ENCODE measurements at regions of chr11 and their contacts with region 1.

Region 1: DNA sequence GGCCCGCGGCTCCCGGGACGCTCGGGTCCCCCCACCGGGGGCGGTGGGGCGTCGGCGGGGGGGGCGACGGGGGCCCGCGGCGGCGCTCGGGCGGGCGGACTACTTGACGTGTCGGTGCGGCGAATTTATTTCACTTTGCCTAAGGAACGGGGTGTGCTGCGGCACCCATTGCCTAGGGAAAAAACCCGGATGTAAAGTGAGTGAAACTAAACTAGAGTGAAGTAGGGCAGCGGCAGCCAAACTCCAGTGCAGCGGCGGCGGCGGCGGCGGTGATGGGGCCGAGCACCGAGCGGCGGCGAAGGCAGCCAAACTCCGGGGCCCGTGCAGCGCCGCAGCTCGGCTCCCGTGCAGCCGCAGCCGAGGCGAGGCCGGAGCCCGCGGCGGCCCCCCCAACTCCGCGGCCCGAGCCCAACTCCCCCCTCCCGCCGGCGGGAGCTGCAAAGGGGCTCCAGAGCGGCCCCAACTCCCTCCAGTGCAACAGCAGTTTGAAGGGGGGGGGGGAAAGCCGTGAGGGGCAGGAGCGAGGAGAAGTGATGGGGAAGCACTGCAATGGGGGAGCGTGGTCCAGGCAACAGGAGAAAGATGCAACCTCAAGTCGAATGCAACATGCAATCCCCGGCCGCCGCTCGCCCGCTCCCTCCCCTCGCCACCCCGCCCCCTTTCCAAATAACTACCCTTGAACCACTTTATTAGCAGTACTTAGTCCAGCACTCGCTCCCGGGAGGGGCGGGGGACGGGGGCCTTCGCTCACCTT is 647 bp upstream of the PHF21A start:
- DNase-seq: peak; percentile 94
- H3K4me3 Mint-ChIP-seq: peak overlapping the region; percentile 84
- H3K27ac Mint-ChIP-seq: peak overlapping the region; percentile 82
- H3K4me1 Mint-ChIP-seq: peaks cover 36% of the 10 kb centered on the region
- H3K27me3 Mint-ChIP-seq: no peaks in the 10 kb centered on the region

Region 2: GRCh38 chr11:45917623-45918330 is 204.1 kb before region 1 on chr11 and contains the start of gene PEX16:
- intact Hi-C with region 1: loop called (anchors 2 kb)
- DNase-seq: peak; percentile 99
- H3K4me3 Mint-ChIP-seq: peak within 1 kb of the TSS; percentile 99
- H3K27ac Mint-ChIP-seq: peak within 1 kb of the TSS; percentile 97
- H3K4me1 Mint-ChIP-seq: peaks cover 21% of the 10 kb centered on the region
- H3K27me3 Mint-ChIP-seq: peaks cover 10% of the 10 kb centered on the region
- total RNA-seq, gene PEX16: 31.3 and 34.8 TPM in 2 replicates

Region 3: DNA sequence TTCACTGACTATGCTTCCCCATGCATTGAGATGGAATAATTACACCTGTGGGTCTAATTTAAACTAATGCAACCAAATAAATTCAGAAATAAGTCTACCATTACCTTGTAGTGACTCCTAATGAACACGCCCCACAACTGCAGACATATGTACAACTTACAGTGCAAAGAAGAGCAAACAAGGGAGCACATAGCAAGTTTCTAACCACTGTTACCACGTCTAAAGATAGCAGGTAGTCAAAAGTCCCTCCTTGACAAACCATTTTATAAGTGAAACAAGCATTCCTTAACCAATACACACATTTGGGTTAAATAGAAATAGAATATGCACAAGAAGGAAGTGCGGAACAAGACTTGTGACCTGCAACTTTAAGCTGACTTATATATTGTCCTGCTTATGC is 21.2 kb before region 1 on chr11:
- intact Hi-C with region 1: loop called (anchors 2 kb)
- DNase-seq: no peak
- H3K4me3 Mint-ChIP-seq: peak overlapping the region; percentile 64
- H3K27ac Mint-ChIP-seq: no peak overlapping the region
- H3K4me1 Mint-ChIP-seq: peaks cover 37% of the 10 kb centered on the region
- H3K27me3 Mint-ChIP-seq: no peaks in the 10 kb centered on the region

Region 4: DNA sequence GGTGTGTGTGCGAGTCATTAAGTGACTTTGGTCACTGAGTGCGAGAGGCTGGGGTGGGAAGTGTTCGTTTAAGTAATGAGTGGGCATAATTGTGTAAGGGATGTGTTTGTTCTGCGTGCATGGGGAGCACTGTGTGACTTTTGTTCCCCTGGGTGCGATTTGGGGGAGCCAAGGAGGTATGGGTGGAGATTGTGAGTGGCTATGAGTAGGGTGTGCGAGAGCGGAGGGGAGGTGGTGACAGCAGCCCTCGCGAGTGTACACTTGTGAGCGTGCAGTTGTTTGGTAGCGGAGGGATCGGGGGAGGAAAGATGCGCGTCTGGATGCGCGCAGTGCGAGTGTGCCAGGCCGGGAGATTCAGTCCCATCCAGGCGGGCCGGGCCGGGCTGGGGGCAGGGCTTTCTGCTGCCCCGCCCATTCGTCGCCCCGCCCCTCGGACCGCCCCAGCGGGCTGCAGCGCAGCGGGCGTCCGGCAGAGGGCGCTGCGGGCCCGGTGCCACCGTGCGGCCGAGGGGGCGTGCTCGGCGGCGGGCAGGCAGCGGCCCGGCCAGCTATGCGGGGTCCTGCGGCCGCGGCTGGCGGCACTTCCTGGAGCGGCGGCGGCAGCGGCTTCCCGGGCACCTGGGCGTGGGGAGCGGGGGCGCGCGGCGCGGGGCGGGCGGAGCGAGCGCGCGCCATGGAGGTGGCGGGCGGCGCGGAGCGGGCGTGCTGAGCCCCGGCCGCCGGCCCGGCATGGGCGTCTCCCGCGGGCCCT is 225.2 kb after region 1 on chr11 and contains the start of gene DGKZ:
- intact Hi-C with region 1: loop called (anchors 1 kb)
- DNase-seq: peak; percentile 98
- H3K4me3 Mint-ChIP-seq: peak within 1 kb of the TSS; percentile 88
- H3K27ac Mint-ChIP-seq: peak within 1 kb of the TSS; percentile 91
- H3K4me1 Mint-ChIP-seq: peaks cover 73% of the 10 kb centered on the region
- H3K27me3 Mint-ChIP-seq: no peaks in the 10 kb centered on the region
- total RNA-seq, gene DGKZ: 87.4 and 94.7 TPM in 2 replicates